Naive thymus-derived CD4-positive, alpha-beta T cell (primary cell): ENCODE measurements at regions of chr2 and their contacts with region 1.

Region 1: DNA sequence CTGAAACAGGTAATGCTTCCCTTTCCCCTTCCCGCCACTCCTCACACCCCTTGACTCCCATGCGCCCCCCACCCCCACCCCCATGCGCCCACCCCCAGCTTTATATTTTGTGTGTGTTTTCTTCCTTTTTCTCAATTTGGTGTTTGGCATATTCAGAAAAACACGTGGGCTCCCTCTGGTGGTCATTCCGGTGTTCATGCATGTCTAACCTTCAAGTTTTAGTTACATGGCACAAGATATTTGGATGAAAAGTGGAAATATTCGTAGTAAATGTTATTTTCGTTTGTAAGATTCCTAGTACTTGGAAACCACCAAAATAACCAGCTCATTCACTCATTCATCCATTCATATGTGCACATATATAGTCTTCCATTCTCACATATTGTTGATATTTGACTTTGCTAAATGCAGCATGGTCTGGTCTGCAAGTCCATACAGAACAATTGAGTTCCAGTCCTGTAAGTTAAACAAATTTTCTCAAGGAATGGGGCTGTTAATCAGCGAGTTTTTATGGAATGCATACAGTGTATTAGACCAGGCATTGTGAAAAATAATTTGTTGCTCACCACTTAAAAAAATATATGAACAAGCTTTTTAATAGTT is 143.6 kb upstream of the MAP3K20 start:
- DNase-seq: peak; percentile 16 to 73 (median 61)
- ATAC-seq: peak; percentile 61
- H3K4me3 ChIP-seq: no peak overlapping the region
- H3K4me3 Mint-ChIP-seq: peak overlapping the region in 6 of 10 donors; percentile 5 to 73 (median 44)
- H3K27ac ChIP-seq: no peak overlapping the region
- H3K27ac Mint-ChIP-seq: no peak overlapping the region
- H3K4me1 ChIP-seq: peaks cover 0 to 6% of the 10 kb centered on the region in 2 donors
- H3K4me1 Mint-ChIP-seq: peaks cover 4 to 19% (median 11%) of the 10 kb centered on the region in 7 donors
- H3K27me3 ChIP-seq: no peaks in the 10 kb centered on the region
- H3K27me3 Mint-ChIP-seq: peaks cover 0 to 17% (median 4%) of the 10 kb centered on the region in 5 donors

Region 2: GRCh38 chr2:172416447-172417058 is 515.5 kb before region 1 on chr2:
- CTCF ChIA-PET with region 1: no interaction called
- POLR2A ChIA-PET with region 1: no interaction called
- intact Hi-C with region 1: no loop called
- DNase-seq: no peak
- ATAC-seq: no peak
- H3K4me3 ChIP-seq: no peak overlapping the region
- H3K4me3 Mint-ChIP-seq: no peak overlapping the region
- H3K27ac ChIP-seq: no peak overlapping the region
- H3K27ac Mint-ChIP-seq: no peak overlapping the region
- H3K4me1 ChIP-seq: no peaks in the 10 kb centered on the region
- H3K4me1 Mint-ChIP-seq: peaks cover 0 to 3% (median 0%) of the 10 kb centered on the region in 7 donors
- H3K27me3 ChIP-seq: no peaks in the 10 kb centered on the region
- H3K27me3 Mint-ChIP-seq: peaks cover 0 to 37% (median 0%) of the 10 kb centered on the region in 5 donors

Region 3: GRCh38 chr2:172806493-172806892 is 125.5 kb before region 1 on chr2:
- CTCF ChIA-PET with region 1: interaction called, 9 read pairs
- POLR2A ChIA-PET with region 1: no interaction called
- intact Hi-C with region 1: loop called (anchors 1 kb)
- DNase-seq: peak in 5 of 9 donors; percentile 22 to 32 (median 26)
- ATAC-seq: no peak
- H3K4me3 ChIP-seq: no peak overlapping the region
- H3K4me3 Mint-ChIP-seq: no peak overlapping the region
- H3K27ac ChIP-seq: no peak overlapping the region
- H3K27ac Mint-ChIP-seq: no peak overlapping the region
- H3K4me1 ChIP-seq: no peaks in the 10 kb centered on the region
- H3K4me1 Mint-ChIP-seq: peaks cover 0 to 8% (median 0%) of the 10 kb centered on the region in 7 donors
- H3K27me3 ChIP-seq: no peaks in the 10 kb centered on the region
- H3K27me3 Mint-ChIP-seq: peaks cover 0 to 15% (median 0%) of the 10 kb centered on the region in 5 donors

Region 4: GRCh38 chr2:172864182-172864581 is 67.8 kb before region 1 on chr2:
- CTCF ChIA-PET with region 1: interaction called, 15 read pairs
- POLR2A ChIA-PET with region 1: no interaction called
- intact Hi-C with region 1: loop called (anchors 1 kb)
- DNase-seq: peak in 8 of 9 donors; percentile 11 to 61 (median 38)
- ATAC-seq: no peak
- H3K4me3 ChIP-seq: no peak overlapping the region
- H3K4me3 Mint-ChIP-seq: no peak overlapping the region
- H3K27ac ChIP-seq: no peak overlapping the region
- H3K27ac Mint-ChIP-seq: no peak overlapping the region
- H3K4me1 ChIP-seq: no peaks in the 10 kb centered on the region
- H3K4me1 Mint-ChIP-seq: no peaks in the 10 kb centered on the region
- H3K27me3 ChIP-seq: no peaks in the 10 kb centered on the region
- H3K27me3 Mint-ChIP-seq: peaks cover 15 to 29% (median 20%) of the 10 kb centered on the region in 5 donors

Region 5: DNA sequence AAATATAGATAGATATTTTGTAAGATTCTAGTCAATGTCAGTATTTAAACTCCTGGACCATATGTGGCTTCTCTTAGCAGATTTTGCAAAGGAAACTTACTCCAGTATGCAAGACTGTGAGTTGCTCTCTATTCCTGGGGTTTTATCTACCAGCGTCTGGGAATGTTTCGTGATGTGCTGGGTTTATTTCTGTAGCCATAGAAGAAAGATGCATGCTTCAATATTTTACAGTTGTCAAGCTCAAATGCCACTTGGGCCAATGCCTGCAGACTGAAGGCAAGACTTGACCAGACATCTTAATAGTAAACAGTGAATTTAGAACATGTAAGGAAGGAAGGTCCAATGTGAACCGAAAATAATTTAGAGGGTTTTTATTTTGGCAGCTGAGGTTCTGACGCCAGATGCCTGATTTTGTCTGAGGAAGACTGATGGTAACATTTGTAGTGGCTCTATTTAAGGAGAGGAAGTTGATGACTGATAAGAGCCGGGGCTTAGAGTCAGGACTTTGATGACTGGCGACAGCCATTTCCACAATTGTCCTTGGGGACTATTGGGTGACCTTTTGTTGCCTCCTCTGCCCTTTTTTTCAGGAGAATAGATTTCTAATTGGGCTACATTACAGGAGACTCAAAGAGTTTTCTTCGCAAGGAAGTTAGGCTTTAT is 42.1 kb before region 1 on chr2:
- CTCF ChIA-PET with region 1: no interaction called
- POLR2A ChIA-PET with region 1: no interaction called
- intact Hi-C with region 1: no loop called
- DNase-seq: no peak
- ATAC-seq: no peak
- H3K4me3 ChIP-seq: no peak overlapping the region
- H3K4me3 Mint-ChIP-seq: no peak overlapping the region
- H3K27ac ChIP-seq: no peak overlapping the region
- H3K27ac Mint-ChIP-seq: no peak overlapping the region
- H3K4me1 ChIP-seq: no peaks in the 10 kb centered on the region
- H3K4me1 Mint-ChIP-seq: peaks cover 0 to 5% (median 2%) of the 10 kb centered on the region in 7 donors
- H3K27me3 ChIP-seq: no peaks in the 10 kb centered on the region
- H3K27me3 Mint-ChIP-seq: peaks cover 8 to 35% (median 16%) of the 10 kb centered on the region in 5 donors

Region 6: DNA sequence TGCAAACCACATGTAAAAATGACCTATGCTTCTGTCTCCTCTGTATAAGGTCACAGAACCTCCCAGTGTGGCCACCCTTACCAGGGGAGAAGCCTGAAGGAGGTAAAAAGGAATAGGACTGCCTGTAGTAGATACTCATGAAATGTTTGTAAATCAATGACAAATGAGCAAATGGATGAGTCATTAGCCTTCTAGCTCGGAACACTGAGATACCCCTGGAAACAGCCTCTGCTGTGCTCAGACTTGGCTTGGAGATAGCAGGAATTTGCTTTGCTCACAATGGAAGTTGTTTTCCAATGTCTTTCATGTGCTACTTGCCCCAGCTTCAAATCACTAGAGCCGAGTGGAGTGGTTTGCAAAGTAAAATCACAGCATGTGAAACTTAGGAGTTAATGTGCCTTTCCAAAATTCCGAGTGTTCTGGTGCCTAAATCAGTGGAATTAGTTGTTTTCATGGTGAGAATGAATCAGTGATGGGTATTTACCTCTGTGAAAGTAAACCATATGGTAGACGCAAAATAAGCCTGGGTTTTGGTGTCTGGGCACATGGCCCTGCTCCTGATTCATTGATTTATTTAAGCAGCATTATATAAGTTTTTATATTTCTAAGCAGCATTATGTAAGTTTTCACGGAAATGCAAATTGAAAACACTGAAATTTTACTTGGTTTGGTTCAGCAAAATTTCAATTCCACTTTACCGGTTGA is 10.3 kb before region 1 on chr2:
- CTCF ChIA-PET with region 1: interaction called, 14 read pairs
- POLR2A ChIA-PET with region 1: no interaction called
- intact Hi-C with region 1: no loop called
- DNase-seq: no peak
- ATAC-seq: no peak
- H3K4me3 ChIP-seq: no peak overlapping the region
- H3K4me3 Mint-ChIP-seq: no peak overlapping the region
- H3K27ac ChIP-seq: no peak overlapping the region
- H3K27ac Mint-ChIP-seq: no peak overlapping the region
- H3K4me1 ChIP-seq: no peaks in the 10 kb centered on the region
- H3K4me1 Mint-ChIP-seq: peaks cover 0 to 11% (median 0%) of the 10 kb centered on the region in 7 donors
- H3K27me3 ChIP-seq: no peaks in the 10 kb centered on the region
- H3K27me3 Mint-ChIP-seq: peaks cover 4 to 18% (median 10%) of the 10 kb centered on the region in 5 donors

Region 7: DNA sequence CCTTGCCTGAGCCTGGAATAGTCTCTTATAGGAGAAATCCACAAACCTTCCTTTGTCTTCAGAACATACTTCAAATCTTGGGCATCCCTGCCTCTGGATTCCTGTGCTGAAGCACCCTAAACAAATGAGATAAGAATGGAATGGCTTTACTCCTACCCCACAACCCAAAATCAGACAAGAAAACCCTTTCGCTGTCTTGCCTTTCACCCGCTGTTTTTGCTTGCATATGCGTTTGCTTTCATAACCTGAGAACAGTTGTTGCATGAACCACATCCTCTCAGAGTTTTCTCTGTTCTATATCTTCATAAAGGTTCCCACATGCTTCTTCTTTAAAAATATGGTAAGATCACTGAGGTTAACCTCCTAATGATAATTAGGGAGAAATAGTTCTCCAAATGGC is 11.5 kb after region 1 on chr2:
- CTCF ChIA-PET with region 1: interaction called, 5 read pairs
- POLR2A ChIA-PET with region 1: no interaction called
- intact Hi-C with region 1: loop called in 1 of 2 experiments (anchors 1 kb)
- DNase-seq: peak in 6 of 9 donors; percentile 14 to 65 (median 47)
- ATAC-seq: peak; percentile 65
- H3K4me3 ChIP-seq: no peak overlapping the region
- H3K4me3 Mint-ChIP-seq: peak overlapping the region in 9 of 10 donors; percentile 48 to 76 (median 60)
- H3K27ac ChIP-seq: peak overlapping the region; percentile 47
- H3K27ac Mint-ChIP-seq: peak overlapping the region; percentile 69 to 97 (median 86)
- H3K4me1 ChIP-seq: peaks cover 0 to 25% of the 10 kb centered on the region in 2 donors
- H3K4me1 Mint-ChIP-seq: peaks cover 9 to 36% (median 29%) of the 10 kb centered on the region in 7 donors
- H3K27me3 ChIP-seq: peaks cover 0 to 4% of the 10 kb centered on the region in 2 donors
- H3K27me3 Mint-ChIP-seq: peaks cover 0 to 21% (median 0%) of the 10 kb centered on the region in 5 donors

Region 8: DNA sequence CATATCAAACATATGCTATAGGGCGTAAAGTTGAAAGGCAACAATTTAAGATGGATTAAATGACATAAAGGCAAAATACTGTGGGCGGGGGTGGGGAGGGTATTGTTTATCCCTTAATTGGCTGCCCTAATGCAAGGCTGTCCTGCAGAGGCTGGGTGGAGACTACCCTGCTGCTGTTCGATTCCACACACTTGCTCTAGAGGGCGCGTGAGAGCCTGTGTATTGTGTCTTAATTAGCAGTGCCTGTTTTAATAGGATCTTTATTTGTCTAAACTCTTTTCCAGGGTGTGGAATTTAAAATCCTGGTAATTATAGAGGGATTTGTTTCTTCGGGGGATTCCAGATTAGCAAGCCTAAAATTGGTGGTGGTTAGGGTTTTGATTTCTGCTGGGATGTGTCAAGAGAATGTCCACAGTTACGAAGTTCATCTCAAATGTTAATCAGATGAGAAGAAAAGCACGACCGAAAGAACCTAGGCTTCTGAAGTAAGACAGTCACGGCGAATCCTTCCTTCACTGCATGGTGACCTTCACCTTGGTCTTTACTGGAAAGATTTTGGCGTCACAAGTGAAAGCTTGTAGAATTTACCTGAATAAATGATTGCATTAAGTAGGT is 40.1 kb after region 1 on chr2:
- CTCF ChIA-PET with region 1: interaction called, 4 read pairs
- POLR2A ChIA-PET with region 1: no interaction called
- intact Hi-C with region 1: loop called in 1 of 2 experiments (anchors 1 kb)
- DNase-seq: peak in 5 of 9 donors; percentile 21 to 43 (median 31)
- ATAC-seq: peak; percentile 66
- H3K4me3 ChIP-seq: no peak overlapping the region
- H3K4me3 Mint-ChIP-seq: no peak overlapping the region
- H3K27ac ChIP-seq: no peak overlapping the region
- H3K27ac Mint-ChIP-seq: peak overlapping the region in 5 of 9 donors; percentile 4 to 94 (median 76)
- H3K4me1 ChIP-seq: no peaks in the 10 kb centered on the region
- H3K4me1 Mint-ChIP-seq: peaks cover 8 to 34% (median 21%) of the 10 kb centered on the region in 7 donors
- H3K27me3 ChIP-seq: no peaks in the 10 kb centered on the region
- H3K27me3 Mint-ChIP-seq: peaks cover 0 to 10% (median 6%) of the 10 kb centered on the region in 5 donors